ENCODE measurements at regions of chr5 and their contacts with region 1.

Region 1: DNA sequence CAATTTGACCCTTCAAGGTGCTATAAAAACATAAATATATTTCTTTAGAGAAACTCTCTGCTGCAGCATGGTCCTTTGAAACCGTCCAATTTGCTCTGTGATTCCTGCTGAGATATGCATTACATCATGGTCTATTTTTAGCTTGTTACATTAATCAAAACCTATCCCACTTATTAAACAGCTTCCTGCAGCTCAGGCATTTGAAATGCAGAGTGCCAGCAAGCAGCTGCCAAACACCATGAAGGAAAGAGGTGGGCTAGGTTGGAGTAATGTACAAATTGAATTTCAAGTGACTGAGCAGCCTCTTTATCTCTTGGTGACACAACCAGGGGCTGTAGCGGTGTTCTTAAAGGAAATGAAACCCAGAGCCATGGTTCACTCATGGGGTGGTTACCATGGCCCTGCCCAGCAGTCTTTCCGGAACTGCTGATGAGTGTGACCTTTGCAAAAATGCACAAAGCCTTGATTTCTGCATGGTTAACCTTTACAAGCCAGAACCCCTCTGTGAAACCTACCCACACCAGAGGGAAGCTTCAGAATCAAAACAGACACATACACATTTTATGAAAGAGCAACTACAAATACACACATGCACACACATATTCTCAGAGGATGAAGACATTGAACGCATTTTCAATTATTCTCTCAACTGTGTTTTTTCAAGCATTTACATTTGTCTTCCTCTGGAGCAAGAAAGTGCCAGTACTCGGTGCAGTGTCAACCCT is 155.8 kb upstream of the ZNF608 start:
- DNase-seq: no peak
- ATAC-seq: peak in 2 of 8 donors; percentile 12 to 34
- H3K4me3 ChIP-seq: no peak overlapping the region
- H3K27ac ChIP-seq: no peak overlapping the region
- H3K4me1 ChIP-seq: peaks cover 5 to 39% (median 33%) of the 10 kb centered on the region in 9 donors
- H3K27me3 ChIP-seq: no peaks in the 10 kb centered on the region
- CTCF ChIP-seq: no peak

Region 2: GRCh38 chr5:124438903-124439281 is 463.4 kb before region 1 on chr5:
- intact Hi-C with region 1: no loop called
- DNase-seq: no peak
- ATAC-seq: peak in 1 of 8 donors; percentile 33
- H3K4me3 ChIP-seq: no peak overlapping the region
- H3K27ac ChIP-seq: no peak overlapping the region
- H3K4me1 ChIP-seq: peaks cover 0 to 32% (median 14%) of the 10 kb centered on the region in 9 donors
- H3K27me3 ChIP-seq: no peaks in the 10 kb centered on the region
- CTCF ChIP-seq: no peak

Region 3: GRCh38 chr5:125011014-125011413 is 108.8 kb after region 1 on chr5:
- intact Hi-C with region 1: no loop called
- DNase-seq: no peak
- ATAC-seq: peak in 1 of 8 donors; percentile 13
- H3K4me3 ChIP-seq: no peak overlapping the region
- H3K27ac ChIP-seq: no peak overlapping the region
- H3K4me1 ChIP-seq: peaks cover 0 to 11% (median 0%) of the 10 kb centered on the region in 9 donors
- H3K27me3 ChIP-seq: no peaks in the 10 kb centered on the region
- CTCF ChIP-seq: no peak

Region 4: GRCh38 chr5:125198270-125198974 is 296.2 kb after region 1 on chr5:
- intact Hi-C with region 1: loop called in 2 of 10 experiments (anchors 5 to 10 kb)
- DNase-seq: peak; percentile 51 to 89
- ATAC-seq: peak; percentile 48 to 85 (median 74)
- H3K4me3 ChIP-seq: no peak overlapping the region
- H3K27ac ChIP-seq: peak overlapping the region in 6 of 10 donors; percentile 28 to 74 (median 60)
- H3K4me1 ChIP-seq: peaks cover 0 to 36% (median 17%) of the 10 kb centered on the region in 9 donors
- H3K27me3 ChIP-seq: no peaks in the 10 kb centered on the region
- CTCF ChIP-seq: no peak

Measured in heart right ventricle (tissue), 16 donors.